Activated T-helper 1 cell treated with anti-CD3 and anti-CD28 coated beads, Interleukin-12 subunit alpha, Interleukin-12 subunit beta, Interleukin-2, Interleukin-4 antibody, amounts not matched to agents 30 ng/mL and 10 ng/mL and 1 ng/mL, durations not matched to agents 14 hours and 24 hours and 36 hours (primary cell): ENCODE measurements at regions of chr20 and their contacts with region 1.

Region 1: GRCh38 chr20:32336918-32337347 is 21.2 kb upstream of the ASXL1 start:
- DNase-seq: no peak
- H3K4me3 Mint-ChIP-seq: no peak overlapping the region
- H3K27ac Mint-ChIP-seq: no peak overlapping the region
- H3K4me1 Mint-ChIP-seq: peaks cover 39% of the 10 kb centered on the region
- H3K27me3 Mint-ChIP-seq: no peaks in the 10 kb centered on the region

Region 2: GRCh38 chr20:32249030-32249738 is 87.7 kb before region 1 on chr20:
- intact Hi-C with region 1: loop called (anchors 1 kb)
- DNase-seq: peak; percentile 46
- H3K4me3 Mint-ChIP-seq: peak overlapping the region; percentile 32
- H3K27ac Mint-ChIP-seq: peak overlapping the region; percentile 94
- H3K4me1 Mint-ChIP-seq: peaks cover 58% of the 10 kb centered on the region
- H3K27me3 Mint-ChIP-seq: no peaks in the 10 kb centered on the region

Region 3: DNA sequence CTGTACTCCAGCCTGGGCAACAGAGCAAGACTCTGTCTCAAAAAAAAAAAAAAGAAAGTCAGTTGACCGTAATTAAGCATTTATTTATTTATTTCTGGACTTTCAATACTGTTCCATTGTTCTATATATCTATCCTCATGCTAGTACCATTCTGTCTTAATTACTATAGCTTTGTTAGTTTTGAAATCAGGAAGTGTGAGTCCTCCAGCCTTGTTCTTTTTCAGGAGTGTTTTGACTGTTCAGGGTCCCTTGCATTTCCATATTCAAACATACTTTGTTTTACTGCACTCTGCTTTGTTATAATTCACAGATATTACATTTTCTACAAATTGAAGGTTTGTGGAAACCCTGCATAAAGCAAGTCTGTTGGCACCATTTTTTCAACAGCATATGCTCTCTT is 15.5 kb before region 1 on chr20:
- intact Hi-C with region 1: loop called (anchors 1 kb)
- DNase-seq: no peak
- H3K4me3 Mint-ChIP-seq: no peak overlapping the region
- H3K27ac Mint-ChIP-seq: peak overlapping the region; percentile 61
- H3K4me1 Mint-ChIP-seq: peaks cover 9% of the 10 kb centered on the region
- H3K27me3 Mint-ChIP-seq: no peaks in the 10 kb centered on the region

Region 4: DNA sequence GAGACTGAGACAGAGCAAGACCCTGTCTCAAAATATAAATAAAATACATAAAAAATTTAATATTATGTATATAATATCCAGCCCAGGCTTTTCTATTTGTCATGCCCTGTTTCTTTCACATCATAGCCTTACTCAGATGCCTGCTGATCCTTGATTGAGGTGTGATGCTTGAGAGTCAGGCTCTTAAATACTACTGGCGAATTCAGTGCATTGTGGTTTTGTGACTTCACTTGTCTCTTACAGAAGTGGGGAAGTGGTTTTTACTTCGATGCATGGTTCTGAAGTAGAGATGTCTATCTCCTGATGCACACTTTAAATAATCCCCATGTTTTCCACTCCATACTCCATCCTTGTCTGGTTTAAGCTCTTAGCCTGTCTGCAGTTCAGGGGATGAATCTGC is 50.3 kb after region 1 on chr20:
- intact Hi-C with region 1: loop called (anchors 2 kb)
- DNase-seq: peak; percentile 55
- H3K4me3 Mint-ChIP-seq: no peak overlapping the region
- H3K27ac Mint-ChIP-seq: peak overlapping the region; percentile 59
- H3K4me1 Mint-ChIP-seq: peaks cover 68% of the 10 kb centered on the region
- H3K27me3 Mint-ChIP-seq: no peaks in the 10 kb centered on the region

Region 5: GRCh38 chr20:32421290-32421689 is 84.4 kb after region 1 on chr20:
- intact Hi-C with region 1: no loop called
- DNase-seq: no peak
- H3K4me3 Mint-ChIP-seq: no peak overlapping the region
- H3K27ac Mint-ChIP-seq: no peak overlapping the region
- H3K4me1 Mint-ChIP-seq: peaks cover 11% of the 10 kb centered on the region
- H3K27me3 Mint-ChIP-seq: no peaks in the 10 kb centered on the region

Region 6: DNA sequence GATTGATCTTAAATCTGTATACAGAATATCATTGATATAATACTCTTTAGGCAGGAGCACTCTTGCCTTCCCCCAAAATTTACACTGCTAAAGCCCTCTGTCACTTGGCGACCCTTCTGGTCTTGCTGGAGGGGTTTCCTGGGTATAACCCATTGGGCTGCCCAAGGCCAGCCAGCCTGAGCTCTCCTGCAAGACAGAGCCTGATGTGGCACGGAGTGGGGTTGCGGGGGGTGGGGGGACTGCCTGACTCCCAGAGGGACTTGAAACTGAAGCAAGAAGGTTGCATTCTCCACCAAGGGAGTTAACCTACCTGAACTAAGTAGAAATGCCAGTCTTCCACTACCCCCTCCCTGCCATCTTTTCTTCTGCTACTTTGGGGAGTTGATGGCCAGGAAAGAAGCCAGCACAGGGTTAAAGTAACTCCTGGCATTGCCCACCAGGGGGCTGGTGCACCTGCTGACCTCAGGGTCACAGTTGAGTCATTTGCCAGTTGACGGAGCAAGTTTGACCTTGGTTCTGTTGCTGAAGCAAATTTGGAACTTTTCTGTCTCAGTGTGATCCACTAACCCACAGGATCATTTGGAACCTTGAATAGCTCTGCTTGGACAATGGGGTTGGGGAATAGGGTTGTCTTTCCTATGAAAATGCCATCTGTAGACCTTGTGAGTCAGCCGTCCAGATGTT is 100.6 kb after region 1 on chr20:
- intact Hi-C with region 1: loop called (anchors 5 kb)
- DNase-seq: no peak
- H3K4me3 Mint-ChIP-seq: no peak overlapping the region
- H3K27ac Mint-ChIP-seq: no peak overlapping the region
- H3K4me1 Mint-ChIP-seq: peaks cover 14% of the 10 kb centered on the region
- H3K27me3 Mint-ChIP-seq: no peaks in the 10 kb centered on the region

Region 7: DNA sequence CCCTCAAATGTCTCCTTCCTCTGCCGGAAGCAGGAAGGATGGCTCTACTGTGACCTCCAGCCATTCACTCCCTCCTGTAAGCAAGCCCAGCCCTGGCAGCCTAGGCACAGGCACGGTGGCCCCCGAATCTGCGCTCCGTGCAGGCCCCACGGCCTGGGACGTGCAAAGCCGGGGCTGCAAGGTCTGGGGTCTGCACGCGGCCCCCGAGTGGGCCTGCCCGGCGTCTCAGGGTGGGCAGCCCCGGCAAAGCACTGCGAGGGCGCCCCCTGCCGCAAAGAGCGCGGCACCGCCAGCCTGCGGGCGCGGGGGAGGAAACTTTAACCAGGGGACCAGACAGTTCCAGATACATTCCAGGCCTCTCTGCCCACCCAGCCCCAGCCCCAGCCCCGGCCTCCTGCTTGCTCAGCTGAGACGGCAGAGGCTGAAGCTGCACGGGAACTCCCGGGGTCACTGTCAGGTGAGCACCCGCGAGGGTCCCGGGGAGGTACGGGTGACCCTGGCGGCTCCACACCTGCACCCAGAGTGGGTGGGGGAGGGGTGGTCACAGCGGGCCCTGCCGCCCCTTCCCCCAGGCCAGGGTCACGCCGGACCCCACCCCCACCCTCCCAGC is 120.0 kb after region 1 on chr20:
- intact Hi-C with region 1: no loop called
- DNase-seq: no peak
- H3K4me3 Mint-ChIP-seq: no peak overlapping the region
- H3K27ac Mint-ChIP-seq: no peak overlapping the region
- H3K4me1 Mint-ChIP-seq: no peaks in the 10 kb centered on the region
- H3K27me3 Mint-ChIP-seq: no peaks in the 10 kb centered on the region

Region 8: GRCh38 chr20:32652739-32653526 is 316.0 kb after region 1 on chr20:
- intact Hi-C with region 1: loop called (anchors 2 kb)
- DNase-seq: peak; percentile 77
- H3K4me3 Mint-ChIP-seq: no peak overlapping the region
- H3K27ac Mint-ChIP-seq: no peak overlapping the region
- H3K4me1 Mint-ChIP-seq: peaks cover 5% of the 10 kb centered on the region
- H3K27me3 Mint-ChIP-seq: peaks cover 5% of the 10 kb centered on the region